PC-9 (cell line): ENCODE measurements at regions of chr15 and their contacts with region 1.

Region 1: DNA sequence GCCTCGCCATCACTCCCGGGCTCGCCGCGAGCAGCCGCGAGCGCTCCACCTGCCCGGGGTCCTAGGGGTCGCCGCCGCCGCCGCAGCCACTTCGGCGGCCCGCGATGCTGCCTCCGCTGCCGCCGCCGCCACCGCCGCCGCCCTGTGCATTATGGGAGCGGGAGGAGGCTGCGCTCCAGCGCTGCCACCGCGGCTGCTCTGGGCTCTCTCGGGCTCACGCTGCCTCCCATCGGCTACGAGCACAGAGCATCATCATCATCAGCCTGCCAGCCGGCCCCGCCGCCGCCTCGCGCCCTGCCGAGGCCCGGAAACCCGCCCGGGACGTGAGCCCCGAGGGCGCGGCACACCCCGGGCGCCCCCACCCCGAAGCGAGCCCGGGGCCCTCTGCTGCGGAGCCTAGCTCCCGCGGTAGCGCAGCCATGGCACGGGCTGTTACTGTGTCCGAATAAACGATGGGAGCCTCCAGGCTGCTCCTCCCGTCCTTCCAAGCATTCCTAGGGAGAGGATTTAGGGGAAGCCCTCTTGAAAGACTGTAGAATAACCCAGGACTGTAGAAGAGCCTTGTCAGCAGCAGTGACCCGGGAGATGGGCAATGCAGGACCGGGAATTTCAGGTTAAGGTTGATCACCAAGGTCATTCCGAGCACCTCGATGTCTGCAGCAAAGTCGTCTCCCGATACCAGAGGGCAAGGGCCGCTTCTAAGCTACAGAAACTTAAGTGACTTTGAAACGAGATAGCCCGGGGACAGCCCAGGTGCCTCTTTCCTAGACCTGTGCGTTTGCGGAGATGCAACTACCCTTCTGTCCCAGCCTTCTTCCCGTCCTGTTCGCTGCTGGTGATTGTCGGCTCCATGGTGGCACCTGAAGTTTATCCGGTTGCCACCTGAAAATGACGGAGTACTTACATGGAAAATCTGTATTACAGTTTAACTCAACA is 579 bp upstream of the MYO5A start:
- DNase-seq: peak in 1 of 2 experiments; percentile 62
- H3K4me3 ChIP-seq: peak overlapping the region; percentile 68; the same call in 1 of the 2 replicates
- H3K27ac ChIP-seq: no peak overlapping the region
- H3K4me1 ChIP-seq: no peaks in the 10 kb centered on the region
- H3K27me3 ChIP-seq: no peaks in the 10 kb centered on the region
- CTCF ChIP-seq: no peak

Region 2: GRCh38 chr15:52179278-52180195 is 349.7 kb before region 1 on chr15:
- CTCF ChIA-PET with region 1: no interaction called
- POLR2A ChIA-PET with region 1: no interaction called
- intact Hi-C with region 1: no loop called
- DNase-seq: peak; percentile 54 to 86
- H3K4me3 ChIP-seq: peak overlapping the region; percentile 60
- H3K27ac ChIP-seq: no peak overlapping the region
- H3K4me1 ChIP-seq: peaks cover 11% of the 10 kb centered on the region
- H3K27me3 ChIP-seq: no peaks in the 10 kb centered on the region
- CTCF ChIP-seq: no peak

Region 3: DNA sequence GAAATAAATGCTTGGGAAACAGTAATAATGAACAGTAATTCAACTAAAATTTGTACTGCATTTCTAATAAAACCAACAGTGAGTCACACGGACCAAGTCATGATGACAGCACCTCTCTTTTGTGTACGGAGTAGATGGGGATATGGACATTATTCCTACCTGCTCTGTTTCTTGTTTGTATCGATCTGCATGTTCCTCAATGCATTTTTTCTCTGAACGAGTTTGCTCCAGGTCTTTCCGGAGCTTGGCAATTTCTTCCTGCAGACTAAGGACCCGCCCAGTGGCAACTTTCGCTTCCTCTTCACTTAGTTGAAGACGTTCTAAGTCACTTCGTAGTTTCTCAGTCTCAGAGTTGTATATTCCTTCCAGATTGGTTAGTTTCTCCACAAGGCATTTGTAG is 159.2 kb before region 1 on chr15:
- CTCF ChIA-PET with region 1: no interaction called
- POLR2A ChIA-PET with region 1: no interaction called
- intact Hi-C with region 1: no loop called
- DNase-seq: no peak
- H3K4me3 ChIP-seq: no peak overlapping the region
- H3K27ac ChIP-seq: no peak overlapping the region
- H3K4me1 ChIP-seq: no peaks in the 10 kb centered on the region
- H3K27me3 ChIP-seq: no peaks in the 10 kb centered on the region
- CTCF ChIP-seq: no peak

Region 4: GRCh38 chr15:52481915-52482314 is 47.3 kb before region 1 on chr15:
- CTCF ChIA-PET with region 1: no interaction called
- POLR2A ChIA-PET with region 1: no interaction called
- intact Hi-C with region 1: no loop called
- DNase-seq: no peak
- H3K4me3 ChIP-seq: no peak overlapping the region
- H3K27ac ChIP-seq: no peak overlapping the region
- H3K4me1 ChIP-seq: no peaks in the 10 kb centered on the region
- H3K27me3 ChIP-seq: no peaks in the 10 kb centered on the region
- CTCF ChIP-seq: no peak

Region 5: DNA sequence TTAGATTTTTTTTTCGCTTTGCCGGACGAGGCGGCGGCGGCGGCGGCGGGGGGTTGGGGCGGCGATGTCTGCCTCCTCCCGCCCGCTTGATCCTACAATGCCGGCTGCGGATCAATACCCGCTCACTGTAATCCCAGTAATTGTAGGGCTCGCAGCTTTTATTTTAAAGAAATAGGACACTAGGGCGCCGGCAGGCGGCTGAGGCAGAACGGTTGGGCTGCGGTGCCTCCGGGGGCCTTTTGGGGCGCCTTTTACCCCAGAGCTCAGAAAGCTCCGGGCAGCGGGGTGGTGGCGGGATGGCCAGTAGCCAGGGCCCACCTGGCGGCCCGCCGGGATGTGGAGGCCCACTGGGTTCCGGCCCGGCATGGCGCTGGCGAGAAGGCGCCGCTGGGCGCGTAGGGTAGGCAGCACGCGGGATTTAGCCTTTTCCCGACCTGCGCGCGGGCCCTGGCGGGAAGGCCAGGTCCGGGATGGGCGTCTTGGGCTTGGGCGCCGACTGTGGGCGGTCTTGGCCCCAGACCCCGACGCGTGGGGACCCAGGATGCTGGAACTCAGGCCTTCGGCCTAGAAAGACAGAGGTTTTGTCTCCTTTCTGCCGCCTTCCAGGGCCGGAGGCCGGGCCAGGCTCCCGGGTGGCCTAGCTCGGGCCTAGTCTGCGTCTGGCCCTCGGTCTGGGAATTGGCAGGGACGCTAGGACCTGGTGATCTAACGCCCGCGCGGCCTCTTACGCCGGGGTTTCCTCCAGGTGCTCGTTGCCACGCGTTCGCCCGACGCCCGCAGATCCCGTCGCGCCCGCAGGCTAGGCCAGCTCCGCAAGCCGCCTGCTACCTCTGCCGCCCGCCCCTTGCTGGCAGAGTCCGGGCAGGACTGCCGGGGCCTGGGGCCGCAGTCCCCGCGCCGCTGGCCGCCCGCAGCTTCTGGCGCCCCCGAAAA is 276.4 kb after region 1 on chr15:
- CTCF ChIA-PET with region 1: no interaction called
- POLR2A ChIA-PET with region 1: interaction called, 10 read pairs
- intact Hi-C with region 1: no loop called
- DNase-seq: no peak
- H3K4me3 ChIP-seq: no peak overlapping the region
- H3K27ac ChIP-seq: no peak overlapping the region
- H3K4me1 ChIP-seq: no peaks in the 10 kb centered on the region
- H3K27me3 ChIP-seq: peaks cover 22% of the 10 kb centered on the region
- CTCF ChIP-seq: no peak